ENCODE measurements at regions of chr4 and their contacts with region 1.

Region 1: DNA sequence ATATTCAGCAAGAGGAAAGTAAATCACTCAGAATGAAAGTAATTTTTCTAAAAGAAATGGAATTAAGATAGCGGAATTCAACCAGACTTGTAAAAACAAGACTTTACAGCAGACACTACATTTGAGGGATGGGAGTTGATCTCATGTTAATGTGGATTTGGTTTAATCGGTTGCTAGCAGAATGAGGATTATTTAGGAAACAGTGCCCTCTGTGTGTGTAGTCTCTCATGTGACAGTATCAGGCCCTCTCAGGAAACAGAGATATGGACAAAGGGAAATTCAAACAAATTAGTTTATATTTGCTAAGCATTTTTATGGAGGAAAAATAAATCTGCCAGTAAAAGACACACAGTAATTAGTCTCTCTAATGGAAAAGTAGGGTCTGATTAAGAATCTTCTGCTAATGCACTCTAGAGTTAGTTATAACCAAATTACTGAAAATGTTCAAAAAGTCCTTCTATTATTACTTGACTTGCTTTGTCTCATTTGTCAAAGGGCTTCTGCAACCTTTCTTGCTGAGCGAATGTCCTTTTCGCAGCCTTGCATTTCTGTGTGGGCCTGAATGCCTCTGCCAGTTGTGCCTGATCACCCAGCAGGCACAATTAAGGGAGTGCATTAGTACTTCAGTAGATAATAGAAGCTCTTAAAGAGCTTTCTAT is 1282.3 kb upstream of the TENM3 start:
- DNase-seq: peak in 1 of 10 donors; percentile 11
- H3K4me3 ChIP-seq: no peak overlapping the region
- H3K27ac ChIP-seq: no peak overlapping the region
- H3K27me3 ChIP-seq: no peaks in the 10 kb centered on the region
- CTCF ChIP-seq: peak in 44 of 56 donors; percentile 16 to 67 (median 37)

Region 2: DNA sequence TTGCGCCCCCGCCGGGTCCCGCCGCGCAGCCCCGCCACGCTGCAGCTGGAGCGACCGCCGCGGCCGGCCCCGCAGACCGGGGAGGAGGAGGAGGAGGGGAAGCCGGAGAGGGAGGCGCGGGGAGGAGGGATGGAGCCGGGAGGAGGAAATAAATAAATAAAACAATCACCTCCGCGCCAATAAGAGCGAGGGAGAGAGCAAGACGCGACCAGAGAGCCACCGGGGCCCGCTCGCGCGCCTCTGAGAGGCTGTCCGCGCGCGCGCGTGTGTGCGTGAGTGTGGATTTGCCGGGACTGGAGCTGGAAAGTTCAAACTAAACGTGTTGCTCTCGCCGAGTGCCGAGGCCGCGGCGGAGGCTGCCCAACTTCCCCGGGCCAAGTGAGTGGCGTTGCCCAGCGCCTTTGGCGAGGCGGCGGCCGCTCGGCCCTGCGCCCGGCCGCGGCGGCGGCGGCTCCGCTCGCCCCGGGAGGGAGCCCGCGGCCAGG is 902.1 kb before region 1 on chr4:
- intact Hi-C with region 1: no loop called
- DNase-seq: peak; percentile 43 to 78 (median 70)
- H3K4me3 ChIP-seq: peak overlapping the region; percentile 43 to 86 (median 72)
- H3K27ac ChIP-seq: peak overlapping the region in 19 of 59 donors; percentile 22 to 87 (median 58)
- H3K27me3 ChIP-seq: peaks cover 0 to 43% (median 0%) of the 10 kb centered on the region in 45 donors
- CTCF ChIP-seq: peak in 3 of 56 donors; percentile 4 to 10 (median 8)

Region 3: DNA sequence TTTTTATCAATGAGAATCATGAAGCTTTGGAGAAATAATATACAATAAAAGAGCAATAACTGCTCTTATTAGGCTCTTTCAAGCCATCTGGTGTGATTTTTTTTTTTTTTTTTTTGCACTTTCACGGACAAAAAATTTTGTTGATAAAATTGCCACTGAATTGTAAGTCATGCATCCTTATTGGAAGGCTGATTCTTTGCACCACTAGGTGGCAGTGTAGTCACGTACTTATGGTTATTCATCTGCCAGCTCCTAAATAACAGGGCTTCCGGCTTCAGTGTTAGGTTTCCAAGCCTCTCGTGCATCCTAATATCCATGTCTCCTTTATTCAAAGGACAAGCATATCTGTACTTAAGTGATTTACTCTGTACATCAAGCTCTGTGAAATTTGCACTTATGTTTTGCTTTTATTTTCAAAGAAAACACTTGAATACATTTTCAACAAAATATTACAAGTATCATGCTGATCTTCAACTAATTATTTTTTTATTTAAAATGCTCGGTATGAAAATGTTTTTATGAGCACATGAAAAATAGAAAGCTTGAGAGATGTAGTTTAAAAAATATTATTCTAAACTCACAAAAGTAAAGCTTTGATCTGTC is 296.0 kb before region 1 on chr4:
- intact Hi-C with region 1: loop called (anchors 10 kb)
- DNase-seq: peak in 7 of 10 donors; percentile 45 to 92 (median 58)
- H3K4me3 ChIP-seq: peak overlapping the region in 32 of 59 donors; percentile 0 to 47 (median 24)
- H3K27ac ChIP-seq: no peak overlapping the region
- H3K27me3 ChIP-seq: no peaks in the 10 kb centered on the region
- CTCF ChIP-seq: peak; percentile 70 to 96 (median 86)

Region 4: GRCh38 chr4:180811556-180811955 is 149.3 kb before region 1 on chr4:
- intact Hi-C with region 1: loop called in 1 of 2 experiments (anchors 10 kb)
- DNase-seq: no peak
- H3K4me3 ChIP-seq: no peak overlapping the region
- H3K27ac ChIP-seq: no peak overlapping the region
- H3K27me3 ChIP-seq: no peaks in the 10 kb centered on the region
- CTCF ChIP-seq: no peak

Region 5: DNA sequence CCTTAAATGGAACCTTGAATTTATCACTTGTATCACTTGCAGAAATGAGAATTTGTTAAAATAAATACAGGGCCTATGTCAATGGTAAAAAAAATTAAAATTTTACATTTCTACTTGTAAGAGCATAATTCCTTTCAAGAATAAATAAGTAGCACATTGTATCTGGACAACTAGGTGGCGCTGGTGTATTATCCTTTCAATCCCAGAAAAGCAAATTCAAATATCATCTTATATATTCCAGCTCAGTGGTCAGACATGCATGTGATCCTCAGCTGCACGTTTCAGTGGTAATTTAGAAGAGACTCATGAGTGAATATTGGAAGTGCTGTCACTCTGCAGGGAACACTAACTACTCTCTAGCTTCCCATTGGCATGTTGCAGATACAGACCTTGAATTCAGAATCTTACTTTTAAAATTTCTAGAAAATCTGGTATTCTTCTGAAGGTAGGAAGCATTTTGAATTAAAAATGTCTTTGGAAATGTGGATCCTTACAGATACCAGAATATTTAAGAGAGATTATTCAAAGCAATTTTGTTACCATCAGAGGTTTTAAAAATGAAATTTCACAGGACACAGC is 132.3 kb before region 1 on chr4:
- intact Hi-C with region 1: loop called in 1 of 2 experiments (anchors 5 kb)
- DNase-seq: peak in 3 of 10 donors; percentile 14 to 68 (median 17)
- H3K4me3 ChIP-seq: peak overlapping the region in 6 of 59 donors; percentile 39 to 68 (median 58)
- H3K27ac ChIP-seq: no peak overlapping the region
- H3K27me3 ChIP-seq: peaks cover 0 to 3% (median 0%) of the 10 kb centered on the region in 45 donors
- CTCF ChIP-seq: peak; percentile 58 to 99 (median 81)

Region 6: DNA sequence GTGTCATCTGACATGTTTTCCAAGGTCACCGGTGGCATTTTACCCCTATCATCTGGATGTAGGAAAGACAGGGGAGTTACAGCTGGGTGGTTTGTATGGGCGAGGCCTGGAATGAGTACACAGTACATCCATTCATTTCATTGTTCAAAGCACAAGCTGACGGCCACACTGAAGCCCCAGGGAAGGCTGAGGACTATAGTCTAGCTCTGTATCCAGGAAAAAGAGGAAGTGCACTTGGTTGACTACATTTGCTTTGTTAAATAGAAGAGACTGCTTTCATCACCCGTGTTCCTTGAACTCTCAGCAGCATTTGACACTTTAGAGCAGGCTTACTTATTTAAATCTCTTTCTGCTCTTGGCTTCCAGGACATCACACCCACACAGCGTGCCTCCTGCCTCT is 241.4 kb after region 1 on chr4:
- intact Hi-C with region 1: no loop called
- DNase-seq: no peak
- H3K4me3 ChIP-seq: no peak overlapping the region
- H3K27ac ChIP-seq: no peak overlapping the region
- H3K27me3 ChIP-seq: peaks cover 0 to 8% (median 0%) of the 10 kb centered on the region in 45 donors
- CTCF ChIP-seq: no peak

Measured in dorsolateral prefrontal cortex (tissue), 120 donors.